GM23248 (cell line): ENCODE measurements at regions of chr11 and their contacts with region 1.

Region 1: GRCh38 chr11:111992206-111992855 is 32.9 kb upstream of the DLAT start:
- DNase-seq: no peak
- H3K4me3 ChIP-seq: no peak overlapping the region
- H3K27ac ChIP-seq: no peak overlapping the region
- H3K4me1 ChIP-seq: peaks cover 14% of the 10 kb centered on the region
- H3K27me3 ChIP-seq: no peaks in the 10 kb centered on the region

Region 2: GRCh38 chr11:111841370-111842053 is 150.8 kb before region 1 on chr11:
- in situ Hi-C with region 1: no loop called
- DNase-seq: peak; percentile 88
- H3K4me3 ChIP-seq: no peak overlapping the region
- H3K27ac ChIP-seq: peak overlapping the region; percentile 48
- H3K4me1 ChIP-seq: peaks cover 36% of the 10 kb centered on the region
- H3K27me3 ChIP-seq: no peaks in the 10 kb centered on the region

Region 3: GRCh38 chr11:111878849-111879636 is 113.3 kb before region 1 on chr11 and contains the starts of genes CFAP68 and FDXACB1:
- in situ Hi-C with region 1: loop called (anchors 10 kb)
- DNase-seq: peak; percentile 99
- H3K4me3 ChIP-seq: peak within 1 kb of the TSS; percentile 83
- H3K27ac ChIP-seq: peak within 1 kb of the TSS; percentile 98
- H3K4me1 ChIP-seq: peaks cover 6% of the 10 kb centered on the region; the same call in 1 of the 2 replicates
- H3K27me3 ChIP-seq: no peaks in the 10 kb centered on the region
- total RNA-seq, gene CFAP68: 7.6 and 9.9 TPM in 2 replicates
- total RNA-seq, gene FDXACB1: 1.4 and 2.2 TPM in 2 replicates

Region 4: GRCh38 chr11:111938687-111939160 is 53.6 kb before region 1 on chr11:
- in situ Hi-C with region 1: loop called (anchors 10 kb)
- DNase-seq: peak; percentile 86
- H3K4me3 ChIP-seq: peak overlapping the region; percentile 79
- H3K27ac ChIP-seq: peak overlapping the region; percentile 80
- H3K4me1 ChIP-seq: peaks cover 75% of the 10 kb centered on the region
- H3K27me3 ChIP-seq: no peaks in the 10 kb centered on the region